AG04450 (cell line): ENCODE measurements at regions of chr9 and their contacts with region 1.

Region 1: DNA sequence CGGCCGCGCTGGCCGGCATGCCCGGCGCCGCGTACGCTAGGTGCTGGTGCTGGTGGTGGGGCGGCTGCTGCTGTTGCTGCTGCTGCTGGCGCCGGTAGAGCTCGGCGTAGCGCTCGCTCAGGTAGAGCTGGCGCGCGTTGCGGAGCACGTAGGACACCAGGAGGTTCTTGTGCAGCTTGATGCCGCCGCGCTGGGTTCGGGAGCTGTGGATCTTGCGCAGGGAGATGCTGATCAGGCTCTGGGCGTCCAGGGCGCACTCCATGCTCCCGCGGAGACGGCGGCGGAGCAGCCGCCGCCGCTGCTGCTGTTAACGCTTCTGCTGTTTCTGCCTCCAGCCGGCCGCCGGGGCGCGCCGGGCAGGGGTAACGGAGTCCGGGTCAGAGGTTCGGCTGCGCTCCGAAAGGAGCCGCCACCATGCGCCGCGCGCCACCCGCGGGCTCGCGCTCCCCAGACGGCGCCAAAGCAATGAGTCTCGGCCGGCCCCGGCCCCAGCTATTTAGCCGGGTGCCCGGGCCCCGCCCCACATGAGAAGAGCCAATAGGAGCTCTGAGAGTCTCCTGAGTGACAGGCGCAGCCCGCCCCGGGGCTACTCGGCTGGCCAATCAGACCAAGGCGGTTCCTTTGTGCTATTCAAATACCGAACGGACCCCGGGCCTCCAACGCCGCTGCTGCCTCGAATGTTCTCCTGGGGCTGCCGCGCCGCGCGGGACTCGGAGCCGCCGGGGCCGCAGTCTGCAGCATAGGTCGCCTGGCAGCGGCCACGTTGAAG is at the start of gene IER5L:
- DNase-seq: peak; percentile 88
- H3K4me3 ChIP-seq: peak within 1 kb of the TSS; percentile 91
- H3K27ac ChIP-seq: peak within 1 kb of the TSS; percentile 61
- H3K27me3 ChIP-seq: no peaks in the 10 kb centered on the region
- CTCF ChIP-seq: no peak
- polyA plus RNA-seq, gene IER5L: 4.9 TPM in 2 replicates

Region 2: DNA sequence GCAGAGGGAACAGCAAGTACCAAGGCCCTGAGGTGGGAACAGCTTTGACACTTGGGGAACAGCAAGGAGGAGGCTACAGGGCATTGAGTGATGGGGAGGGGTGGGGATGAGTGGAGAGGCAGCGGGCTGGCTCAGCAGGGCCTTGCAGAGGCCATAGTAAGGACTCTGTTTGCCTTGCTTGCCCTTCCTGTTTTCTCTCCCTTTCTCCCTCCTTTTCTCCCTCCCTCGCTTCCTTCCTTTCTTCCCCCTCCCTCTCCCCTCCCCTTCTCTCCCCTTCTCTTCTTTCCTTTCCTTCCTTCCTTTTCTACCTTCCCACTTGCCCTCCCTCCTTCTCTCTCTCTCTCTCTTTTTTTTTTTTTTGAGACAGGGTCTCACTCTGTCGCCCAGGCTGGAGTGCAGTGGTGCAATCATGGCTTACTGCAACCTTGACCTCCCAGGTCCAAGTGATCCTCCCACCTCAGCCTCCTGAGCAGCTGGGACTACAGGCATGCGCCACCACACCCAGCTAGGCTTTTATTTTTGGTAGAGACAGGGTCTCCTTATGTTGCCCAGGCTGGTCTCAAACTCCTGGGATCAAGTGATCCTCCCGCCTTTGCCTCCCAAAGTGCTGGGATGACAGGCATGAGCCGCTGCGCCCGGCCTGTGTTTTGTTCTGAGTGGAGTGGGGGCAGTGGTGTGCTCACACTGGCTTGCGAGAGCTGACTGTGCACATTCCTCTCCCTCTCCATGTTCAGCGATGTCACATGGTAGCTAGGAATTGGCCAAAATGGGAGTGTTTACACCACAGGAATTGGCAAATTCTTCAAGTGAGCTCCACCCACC is 17.1 kb before region 1 on chr9:
- CTCF ChIA-PET with region 1: interaction called, 19 read pairs
- POLR2A ChIA-PET with region 1: interaction called, 30 read pairs
- DNase-seq: no peak
- H3K4me3 ChIP-seq: no peak overlapping the region
- H3K27ac ChIP-seq: no peak overlapping the region
- H3K27me3 ChIP-seq: no peaks in the 10 kb centered on the region
- CTCF ChIP-seq: no peak

Region 3: GRCh38 chr9:129258124-129258822 is 80.3 kb after region 1 on chr9:
- CTCF ChIA-PET with region 1: no interaction called
- POLR2A ChIA-PET with region 1: interaction called, 17 read pairs
- DNase-seq: peak; percentile 61
- H3K4me3 ChIP-seq: peak overlapping the region; percentile 48
- H3K27ac ChIP-seq: no peak overlapping the region
- H3K27me3 ChIP-seq: no peaks in the 10 kb centered on the region
- CTCF ChIP-seq: no peak

Region 4: GRCh38 chr9:129333953-129334724 is 156.2 kb after region 1 on chr9:
- CTCF ChIA-PET with region 1: interaction called, 6 read pairs
- POLR2A ChIA-PET with region 1: interaction called, 20 read pairs
- DNase-seq: peak; percentile 87
- H3K4me3 ChIP-seq: peak overlapping the region; percentile 12; the same call in 1 of the 2 replicates
- H3K27ac ChIP-seq: peak overlapping the region; percentile 86
- H3K27me3 ChIP-seq: no peaks in the 10 kb centered on the region
- CTCF ChIP-seq: 0 out of 2 replicates have a peak, but pooled peaks have one; percentile 2

Region 5: GRCh38 chr9:129482521-129483414 is 304.8 kb after region 1 on chr9:
- CTCF ChIA-PET with region 1: interaction called, 5 read pairs
- POLR2A ChIA-PET with region 1: interaction called, 26 read pairs
- DNase-seq: no peak
- H3K4me3 ChIP-seq: peak overlapping the region; percentile 44
- H3K27ac ChIP-seq: peak overlapping the region; percentile 100
- H3K27me3 ChIP-seq: no peaks in the 10 kb centered on the region
- CTCF ChIP-seq: no peak

Region 6: GRCh38 chr9:129597355-129598088 is 419.5 kb after region 1 on chr9:
- CTCF ChIA-PET with region 1: interaction called, 11 read pairs
- POLR2A ChIA-PET with region 1: interaction called, 8 read pairs
- DNase-seq: no peak
- H3K4me3 ChIP-seq: peak overlapping the region; percentile 59
- H3K27ac ChIP-seq: peak overlapping the region; percentile 77
- H3K27me3 ChIP-seq: no peaks in the 10 kb centered on the region
- CTCF ChIP-seq: no peak